ENCODE measurements at regions of chr9 and their contacts with region 1.

Region 1: DNA sequence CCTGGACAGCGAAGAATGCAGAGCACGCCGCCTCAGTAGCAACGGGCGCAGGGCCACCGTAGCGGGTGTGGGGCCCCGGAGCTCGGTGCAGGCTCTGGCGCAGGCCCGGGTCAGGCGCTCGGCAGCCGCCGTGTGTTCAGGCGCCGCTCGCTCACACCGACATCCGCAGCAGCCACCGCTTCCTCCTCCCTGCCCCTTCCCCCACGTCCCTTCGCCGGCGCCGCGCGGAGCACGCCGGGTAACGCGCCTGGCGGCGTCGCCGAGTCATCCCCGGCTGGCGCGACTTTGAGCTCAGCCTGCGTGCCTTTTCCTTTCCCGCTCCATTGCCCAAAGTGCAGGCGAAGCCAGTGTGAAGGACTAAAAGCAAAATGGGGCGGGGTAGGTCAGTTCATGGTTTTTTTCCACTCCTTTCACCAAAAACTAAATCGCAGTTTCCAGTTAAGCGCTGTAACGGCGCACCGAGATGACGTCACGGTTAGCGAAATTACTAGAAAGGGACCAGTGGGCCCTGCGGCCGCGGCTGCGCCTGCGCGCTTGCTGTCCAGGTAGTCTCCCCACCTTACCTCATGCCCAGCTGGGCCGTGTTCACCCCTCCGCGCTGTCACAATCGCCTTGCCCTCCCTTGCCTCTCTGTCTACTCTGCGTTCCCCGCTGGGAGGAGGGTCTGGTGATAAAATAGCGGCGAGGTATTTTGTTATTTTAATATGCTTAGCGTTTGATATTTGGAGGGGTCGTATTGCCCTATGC is at the start of gene UBQLN1:
- DNase-seq: peak; percentile 92
- ATAC-seq: peak; percentile 85
- H3K4me3 Mint-ChIP-seq: peak within 1 kb of the TSS; percentile 99
- H3K27ac Mint-ChIP-seq: peak within 1 kb of the TSS; percentile 99
- H3K4me1 Mint-ChIP-seq: peaks cover 36% of the 10 kb centered on the region
- H3K27me3 Mint-ChIP-seq: no peaks in the 10 kb centered on the region
- CTCF ChIP-seq: no peak
- total RNA-seq, gene UBQLN1: 84.4 and 96.8 TPM in 2 replicates

Region 2: DNA sequence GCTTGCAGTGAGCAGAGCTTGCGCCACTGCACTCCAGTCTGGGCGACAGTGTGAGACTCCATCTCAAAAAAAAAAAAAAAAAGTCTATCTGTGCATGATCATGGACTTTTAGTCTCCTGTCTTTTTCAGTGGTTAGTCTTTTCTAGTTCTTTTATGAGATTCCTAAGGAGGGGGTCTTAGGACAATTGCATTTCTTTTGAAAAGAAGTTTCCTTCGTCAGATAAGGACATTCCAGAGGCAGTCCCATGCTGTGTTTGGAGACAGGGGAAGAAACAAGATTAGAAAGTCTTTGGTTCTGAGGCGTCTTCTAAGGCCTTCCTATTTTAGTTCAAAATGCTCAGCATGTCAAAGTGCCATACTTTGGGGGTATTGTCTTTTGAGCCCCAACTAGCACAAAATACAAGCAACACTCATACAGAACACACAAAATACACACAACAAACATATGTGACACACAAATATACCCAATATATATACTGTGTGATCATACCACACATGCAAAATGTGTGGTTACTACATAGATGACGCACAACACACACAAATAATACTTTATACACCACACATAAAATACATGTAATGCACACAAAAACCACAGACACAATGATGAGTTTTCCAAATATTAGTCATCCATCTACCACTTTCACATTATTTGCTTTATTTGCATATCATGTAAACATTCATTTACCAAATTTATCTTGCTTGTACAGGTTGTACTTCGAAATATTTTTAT is 1324.9 kb before region 1 on chr9:
- CTCF ChIA-PET with region 1: no interaction called
- POLR2A ChIA-PET with region 1: no interaction called
- intact Hi-C with region 1: no loop called
- DNase-seq: no peak
- ATAC-seq: no peak
- H3K4me3 Mint-ChIP-seq: no peak overlapping the region
- H3K27ac Mint-ChIP-seq: no peak overlapping the region
- H3K4me1 Mint-ChIP-seq: no peaks in the 10 kb centered on the region
- H3K27me3 Mint-ChIP-seq: no peaks in the 10 kb centered on the region
- CTCF ChIP-seq: no peak

Region 3: DNA sequence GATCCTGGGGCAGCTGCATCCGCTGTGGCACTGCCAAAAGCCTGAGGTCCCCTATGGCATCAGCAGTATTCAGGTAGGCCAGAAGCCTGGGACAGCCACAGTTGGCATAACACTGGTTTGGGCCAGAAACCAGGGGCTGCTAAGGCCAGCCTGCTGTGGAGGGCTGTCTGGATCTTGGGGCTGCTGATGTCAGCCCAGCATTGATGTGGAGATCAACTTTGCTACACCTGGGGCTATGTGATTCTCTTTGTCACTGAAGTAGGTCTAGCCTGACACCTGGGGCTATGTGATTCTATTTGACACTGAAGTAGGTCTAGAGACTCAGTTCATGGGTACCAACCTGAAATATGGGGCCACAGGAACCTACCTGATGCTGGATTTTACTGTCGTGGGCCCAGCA is 1056.5 kb before region 1 on chr9:
- CTCF ChIA-PET with region 1: no interaction called
- POLR2A ChIA-PET with region 1: no interaction called
- intact Hi-C with region 1: no loop called
- DNase-seq: no peak
- ATAC-seq: no peak
- H3K4me3 Mint-ChIP-seq: no peak overlapping the region
- H3K27ac Mint-ChIP-seq: no peak overlapping the region
- H3K4me1 Mint-ChIP-seq: no peaks in the 10 kb centered on the region
- H3K27me3 Mint-ChIP-seq: no peaks in the 10 kb centered on the region
- CTCF ChIP-seq: no peak

Region 4: DNA sequence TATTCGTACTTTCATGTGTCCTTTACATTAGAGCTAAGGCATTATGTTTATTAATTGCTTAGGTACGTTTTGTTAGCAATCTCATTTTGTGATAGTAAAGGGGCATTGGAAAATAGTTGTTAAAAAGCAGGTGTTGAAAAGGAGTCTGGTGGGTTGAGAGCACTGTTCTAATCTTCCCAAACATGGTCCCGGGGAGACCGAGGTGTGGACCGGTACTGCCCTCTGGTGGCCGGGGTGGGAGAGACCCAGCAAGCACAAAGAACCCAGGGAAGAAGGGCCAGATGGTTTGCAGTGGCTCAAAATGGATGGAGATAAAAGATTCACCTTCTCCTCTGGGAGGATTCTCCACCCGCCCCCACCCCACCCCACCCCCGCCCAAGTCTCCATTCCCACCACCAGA is 58.9 kb before region 1 on chr9:
- CTCF ChIA-PET with region 1: no interaction called
- POLR2A ChIA-PET with region 1: interaction called, 10 read pairs
- intact Hi-C with region 1: loop called (anchors 2 kb)
- DNase-seq: peak; percentile 61
- ATAC-seq: peak; percentile 89
- H3K4me3 Mint-ChIP-seq: no peak overlapping the region
- H3K27ac Mint-ChIP-seq: no peak overlapping the region
- H3K4me1 Mint-ChIP-seq: peaks cover 6% of the 10 kb centered on the region
- H3K27me3 Mint-ChIP-seq: no peaks in the 10 kb centered on the region
- CTCF ChIP-seq: no peak

Region 5: DNA sequence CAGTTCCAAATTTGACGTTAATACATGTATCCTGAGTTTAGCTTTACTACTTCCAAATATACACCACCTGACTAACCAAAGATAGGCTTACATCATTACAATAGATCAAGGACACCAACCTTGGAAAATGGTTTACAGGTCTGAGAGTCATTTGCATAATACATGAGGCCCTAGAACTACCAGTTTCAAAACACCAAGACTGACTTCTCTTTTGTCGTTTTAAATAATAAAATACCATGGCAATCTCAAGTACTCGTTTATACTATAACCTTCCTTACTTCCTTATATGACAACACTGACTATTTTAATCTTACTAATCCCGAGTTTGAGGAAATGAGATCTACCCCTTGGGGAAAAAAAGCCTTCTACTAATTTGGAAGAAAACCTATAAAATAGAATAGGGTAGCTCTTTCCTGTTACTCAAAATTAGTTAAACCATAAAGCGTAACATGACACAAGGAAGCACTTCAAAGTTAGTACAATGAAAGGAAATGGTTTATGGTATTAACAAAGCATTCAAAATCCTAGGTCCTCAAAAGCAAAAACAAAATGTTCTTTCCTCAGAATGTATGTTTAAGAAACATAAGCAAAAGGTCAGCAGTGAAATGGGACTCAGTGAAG is 42.3 kb before region 1 on chr9:
- CTCF ChIA-PET with region 1: no interaction called
- POLR2A ChIA-PET with region 1: no interaction called
- intact Hi-C with region 1: loop called (anchors 5 kb)
- DNase-seq: no peak
- ATAC-seq: peak; percentile 31
- H3K4me3 Mint-ChIP-seq: no peak overlapping the region
- H3K27ac Mint-ChIP-seq: peak overlapping the region; percentile 74
- H3K4me1 Mint-ChIP-seq: peaks cover 21% of the 10 kb centered on the region
- H3K27me3 Mint-ChIP-seq: no peaks in the 10 kb centered on the region
- CTCF ChIP-seq: no peak

Region 6: DNA sequence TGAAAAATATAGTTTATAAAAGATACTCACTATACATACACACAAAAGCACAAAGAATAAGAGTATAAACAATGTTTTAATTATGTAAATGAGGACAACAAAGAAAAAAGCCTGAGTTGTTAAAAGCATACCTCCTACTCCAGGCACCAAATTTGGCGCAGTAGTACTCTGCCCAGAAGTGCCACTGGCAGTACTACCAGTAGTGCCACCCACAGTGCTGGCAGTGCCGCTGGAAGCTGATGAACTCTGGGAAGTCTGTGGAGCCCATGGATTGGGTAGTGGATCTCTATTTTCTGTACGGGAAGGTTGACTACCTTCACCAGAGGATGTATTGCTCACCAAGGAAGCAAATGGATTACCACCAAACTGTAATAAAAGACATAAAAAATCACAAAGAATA is 30.3 kb before region 1 on chr9:
- CTCF ChIA-PET with region 1: no interaction called
- POLR2A ChIA-PET with region 1: interaction called, 3 read pairs
- intact Hi-C with region 1: loop called (anchors 2 kb)
- DNase-seq: no peak
- ATAC-seq: no peak
- H3K4me3 Mint-ChIP-seq: no peak overlapping the region
- H3K27ac Mint-ChIP-seq: no peak overlapping the region
- H3K4me1 Mint-ChIP-seq: no peaks in the 10 kb centered on the region
- H3K27me3 Mint-ChIP-seq: no peaks in the 10 kb centered on the region
- CTCF ChIP-seq: no peak

Region 7: GRCh38 chr9:83754383-83754977 is 46.5 kb after region 1 on chr9:
- CTCF ChIA-PET with region 1: no interaction called
- POLR2A ChIA-PET with region 1: no interaction called
- intact Hi-C with region 1: no loop called
- DNase-seq: no peak
- ATAC-seq: no peak
- H3K4me3 Mint-ChIP-seq: no peak overlapping the region
- H3K27ac Mint-ChIP-seq: no peak overlapping the region
- H3K4me1 Mint-ChIP-seq: peaks cover 5% of the 10 kb centered on the region
- H3K27me3 Mint-ChIP-seq: no peaks in the 10 kb centered on the region
- CTCF ChIP-seq: no peak

Region 8: GRCh38 chr9:83920927-83921707 is 213.2 kb after region 1 on chr9 and contains the start of gene KIF27:
- CTCF ChIA-PET with region 1: no interaction called
- POLR2A ChIA-PET with region 1: interaction called, 14 read pairs
- intact Hi-C with region 1: loop called (anchors 1 kb)
- DNase-seq: peak; percentile 99
- ATAC-seq: peak; percentile 85
- H3K4me3 Mint-ChIP-seq: peak within 1 kb of the TSS; percentile 91
- H3K27ac Mint-ChIP-seq: peak within 1 kb of the TSS; percentile 94
- H3K4me1 Mint-ChIP-seq: peaks cover 19% of the 10 kb centered on the region
- H3K27me3 Mint-ChIP-seq: no peaks in the 10 kb centered on the region
- CTCF ChIP-seq: no peak
- total RNA-seq, gene KIF27: 4.9 and 5.1 TPM in 2 replicates